Heart right ventricle (tissue), 16 donors: ENCODE measurements at regions of chr17 and their contacts with region 1.

Region 1: DNA sequence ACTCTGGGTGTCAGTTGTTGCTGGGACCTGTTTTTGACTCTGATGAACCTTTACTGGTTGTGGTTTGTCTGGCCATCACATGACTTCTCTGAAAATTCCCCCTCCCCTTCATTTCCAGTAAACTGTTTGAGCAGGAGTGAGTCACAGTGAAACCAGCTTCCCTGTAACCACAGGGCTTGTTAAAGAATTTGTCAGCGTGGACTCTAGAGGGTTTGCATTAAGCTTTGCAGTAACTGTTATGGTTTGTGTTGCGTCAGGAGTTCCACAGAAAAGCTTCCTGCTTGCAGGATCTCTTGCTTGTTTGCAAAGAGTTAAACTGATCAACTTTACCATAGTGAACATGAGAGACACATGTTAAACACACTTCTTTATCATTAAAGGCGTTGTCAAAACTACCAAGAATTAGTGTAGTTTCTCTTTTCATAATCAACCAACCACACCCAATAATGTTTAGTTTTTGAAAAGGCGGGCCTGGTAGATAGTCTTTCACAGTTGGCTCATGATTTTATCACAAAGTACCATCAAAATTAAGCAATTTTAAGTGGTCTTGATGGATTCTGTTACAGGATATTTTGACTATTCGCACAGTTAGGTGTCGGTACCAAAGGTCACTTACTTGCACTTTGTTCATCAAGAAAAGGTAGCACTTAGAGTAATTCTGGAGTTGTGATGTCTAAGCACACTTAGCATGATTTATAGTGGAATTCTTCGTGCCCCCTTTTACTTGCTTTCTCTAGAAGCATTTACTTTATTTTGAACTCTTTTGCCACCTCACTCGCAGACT is 79.3 kb downstream of the VMP1 start:
- DNase-seq: peak in 1 of 2 donors; percentile 65
- ATAC-seq: peak; percentile 60 to 97 (median 86)
- H3K4me3 ChIP-seq: peak overlapping the region in 5 of 10 donors; percentile 1 to 30 (median 11)
- H3K27ac ChIP-seq: peak overlapping the region in 9 of 10 donors; percentile 46 to 93 (median 76)
- H3K4me1 ChIP-seq: peaks cover 6 to 95% (median 35%) of the 10 kb centered on the region in 9 donors
- H3K27me3 ChIP-seq: no peaks in the 10 kb centered on the region
- CTCF ChIP-seq: peak in 2 of 9 donors; percentile 14 to 30

Region 2: GRCh38 chr17:59829217-59830006 is 42.7 kb after region 1 on chr17:
- intact Hi-C with region 1: loop called in 3 of 10 experiments (anchors 5 to 10 kb)
- DNase-seq: peak in 1 of 2 donors; percentile 54
- ATAC-seq: peak; percentile 73 to 92 (median 80)
- H3K4me3 ChIP-seq: peak overlapping the region in 2 of 10 donors; percentile 13 to 34
- H3K27ac ChIP-seq: peak overlapping the region in 8 of 10 donors; percentile 55 to 90 (median 68)
- H3K4me1 ChIP-seq: peaks cover 0 to 92% (median 24%) of the 10 kb centered on the region in 9 donors
- H3K27me3 ChIP-seq: no peaks in the 10 kb centered on the region
- CTCF ChIP-seq: no peak

Region 3: GRCh38 chr17:59837308-59838051 is 50.8 kb after region 1 on chr17:
- intact Hi-C with region 1: loop called in 1 of 10 experiments (anchors 10 kb)
- DNase-seq: peak in 1 of 2 donors; percentile 89
- ATAC-seq: peak; percentile 93 to 96 (median 94)
- H3K4me3 ChIP-seq: peak overlapping the region in 9 of 10 donors; percentile 38 to 68 (median 58)
- H3K27ac ChIP-seq: peak overlapping the region; percentile 73 to 97 (median 90)
- H3K4me1 ChIP-seq: peaks cover 0 to 40% (median 32%) of the 10 kb centered on the region in 9 donors
- H3K27me3 ChIP-seq: no peaks in the 10 kb centered on the region
- CTCF ChIP-seq: peak in 1 of 9 donors; percentile 11